Common myeloid progenitor, CD34-positive (primary cell): ENCODE measurements at regions of chrX and their contacts with region 1.

Region 1: GRCh38 chrX:16719334-16720084 is at the start of gene SYAP1:
- DNase-seq: peak; percentile 93 to 97 (median 97)
- H3K4me3 ChIP-seq: peak within 1 kb of the TSS; percentile 54 to 87 (median 65)
- H3K27ac ChIP-seq: peak within 1 kb of the TSS; percentile 91 to 97
- H3K4me1 ChIP-seq: peaks cover 3 to 10% (median 7%) of the 10 kb centered on the region in 4 experiments
- H3K27me3 ChIP-seq: peaks cover 0 to 22% (median 0%) of the 10 kb centered on the region in 5 experiments

Region 2: GRCh38 chrX:16705370-16705769 is 14.1 kb before region 1 on chrX:
- CTCF ChIA-PET with region 1: no interaction called
- POLR2A ChIA-PET with region 1: no interaction called
- DNase-seq: no peak
- H3K4me3 ChIP-seq: no peak overlapping the region
- H3K27ac ChIP-seq: no peak overlapping the region
- H3K4me1 ChIP-seq: no peaks in the 10 kb centered on the region
- H3K27me3 ChIP-seq: peaks cover 0 to 2% (median 0%) of the 10 kb centered on the region in 5 experiments

Region 3: GRCh38 chrX:16953606-16954220 is 234.2 kb after region 1 on chrX:
- CTCF ChIA-PET with region 1: no interaction called
- POLR2A ChIA-PET with region 1: interaction called, 15 read pairs
- DNase-seq: peak; percentile 56 to 77 (median 65)
- H3K4me3 ChIP-seq: peak overlapping the region in 1 of 7 experiments; percentile 38
- H3K27ac ChIP-seq: no peak overlapping the region
- H3K4me1 ChIP-seq: peaks cover 16 to 52% (median 29%) of the 10 kb centered on the region in 4 experiments
- H3K27me3 ChIP-seq: peaks cover 0 to 8% (median 0%) of the 10 kb centered on the region in 5 experiments